Mammary epithelial cell (primary cell): ENCODE measurements at regions of chr2 and their contacts with region 1.

Region 1: GRCh38 chr2:86358957-86359356 is 21.5 kb upstream of the REEP1 start:
- DNase-seq: no peak
- H3K4me3 ChIP-seq: no peak overlapping the region
- H3K27ac ChIP-seq: no peak overlapping the region
- H3K4me1 ChIP-seq: no peaks in the 10 kb centered on the region
- H3K27me3 ChIP-seq: peaks cover 3% of the 10 kb centered on the region
- CTCF ChIP-seq: no peak

Region 2: DNA sequence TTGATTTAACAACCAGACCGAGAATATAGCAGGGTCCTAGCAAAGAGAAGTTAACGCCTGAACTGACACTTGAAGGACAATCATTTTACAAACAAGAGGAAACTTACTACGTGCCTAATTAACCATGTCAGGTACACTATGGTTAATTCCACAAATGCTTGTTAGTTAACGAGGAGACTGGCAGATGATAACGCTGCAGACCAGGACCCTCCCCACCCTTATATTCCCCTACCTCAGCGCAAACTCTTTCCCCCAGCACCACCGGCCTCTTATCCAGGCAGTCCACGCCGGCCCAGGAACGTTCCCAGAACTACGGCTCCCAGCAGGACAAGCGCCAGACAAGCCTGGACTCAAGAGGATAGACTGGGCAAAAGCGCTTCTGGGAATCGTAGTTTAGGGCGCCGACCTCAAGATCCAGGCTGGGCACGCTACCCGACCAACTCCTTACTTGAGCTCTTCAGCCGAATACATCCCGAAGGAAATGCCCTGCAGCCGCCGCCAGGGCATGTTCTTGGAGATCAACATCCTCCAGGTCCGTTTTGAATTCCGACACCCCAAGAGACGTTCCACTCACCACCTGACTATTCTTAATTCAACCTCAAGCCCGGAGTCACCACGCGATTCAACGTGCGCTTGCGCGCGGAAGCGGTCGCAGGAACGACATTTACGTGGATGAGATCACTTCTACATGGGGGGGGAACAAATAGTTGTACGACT is 253.5 kb before region 1 on chr2 and contains the start of gene POLR1A:
- CTCF ChIA-PET with region 1: no interaction called
- dilution Hi-C with region 1: no loop called
- in situ Hi-C with region 1: no loop called
- intact Hi-C with region 1: no loop called
- DNase-seq: peak; percentile 90
- H3K4me3 ChIP-seq: peak within 1 kb of the TSS; percentile 78 to 90 (median 88)
- H3K27ac ChIP-seq: peak within 1 kb of the TSS; percentile 87
- H3K4me1 ChIP-seq: peaks cover 25% of the 10 kb centered on the region
- H3K27me3 ChIP-seq: no peaks in the 10 kb centered on the region
- CTCF ChIP-seq: peak in 1 of 2 donors; percentile 6
- total RNA-seq, gene POLR1A: 35.7 to 49.4 TPM

Region 3: DNA sequence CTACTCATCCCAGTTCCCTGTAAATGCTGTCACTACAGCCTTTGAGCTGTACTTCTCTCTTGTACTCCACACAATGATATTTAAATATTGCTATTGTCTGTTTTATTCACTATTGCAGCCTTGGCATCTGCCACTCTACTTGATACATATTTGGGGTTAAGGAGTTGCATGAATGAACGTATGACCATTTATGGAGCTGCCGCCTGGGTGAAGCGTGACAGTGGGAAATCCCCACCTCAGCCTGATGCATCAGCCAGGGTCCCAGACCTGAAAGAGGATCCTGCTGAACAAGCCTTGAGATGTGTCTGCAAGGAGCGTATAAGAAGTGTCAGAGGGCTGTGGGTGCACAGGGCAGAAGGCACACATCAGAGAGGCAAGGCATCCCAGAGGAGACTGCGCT is 120.6 kb before region 1 on chr2:
- CTCF ChIA-PET with region 1: no interaction called
- dilution Hi-C with region 1: no loop called
- in situ Hi-C with region 1: loop called in 1 of 2 experiments (anchors 10 kb)
- intact Hi-C with region 1: no loop called
- DNase-seq: no peak
- H3K4me3 ChIP-seq: no peak overlapping the region
- H3K27ac ChIP-seq: no peak overlapping the region
- H3K4me1 ChIP-seq: no peaks in the 10 kb centered on the region
- H3K27me3 ChIP-seq: peaks cover 4% of the 10 kb centered on the region
- CTCF ChIP-seq: no peak

Region 4: GRCh38 chr2:86290596-86291327 is 68.2 kb before region 1 on chr2:
- CTCF ChIA-PET with region 1: no interaction called
- dilution Hi-C with region 1: loop called (anchors 5 kb)
- in situ Hi-C with region 1: no loop called
- intact Hi-C with region 1: no loop called
- DNase-seq: no peak
- H3K4me3 ChIP-seq: no peak overlapping the region
- H3K27ac ChIP-seq: no peak overlapping the region
- H3K4me1 ChIP-seq: no peaks in the 10 kb centered on the region
- H3K27me3 ChIP-seq: no peaks in the 10 kb centered on the region
- CTCF ChIP-seq: no peak

Region 5: DNA sequence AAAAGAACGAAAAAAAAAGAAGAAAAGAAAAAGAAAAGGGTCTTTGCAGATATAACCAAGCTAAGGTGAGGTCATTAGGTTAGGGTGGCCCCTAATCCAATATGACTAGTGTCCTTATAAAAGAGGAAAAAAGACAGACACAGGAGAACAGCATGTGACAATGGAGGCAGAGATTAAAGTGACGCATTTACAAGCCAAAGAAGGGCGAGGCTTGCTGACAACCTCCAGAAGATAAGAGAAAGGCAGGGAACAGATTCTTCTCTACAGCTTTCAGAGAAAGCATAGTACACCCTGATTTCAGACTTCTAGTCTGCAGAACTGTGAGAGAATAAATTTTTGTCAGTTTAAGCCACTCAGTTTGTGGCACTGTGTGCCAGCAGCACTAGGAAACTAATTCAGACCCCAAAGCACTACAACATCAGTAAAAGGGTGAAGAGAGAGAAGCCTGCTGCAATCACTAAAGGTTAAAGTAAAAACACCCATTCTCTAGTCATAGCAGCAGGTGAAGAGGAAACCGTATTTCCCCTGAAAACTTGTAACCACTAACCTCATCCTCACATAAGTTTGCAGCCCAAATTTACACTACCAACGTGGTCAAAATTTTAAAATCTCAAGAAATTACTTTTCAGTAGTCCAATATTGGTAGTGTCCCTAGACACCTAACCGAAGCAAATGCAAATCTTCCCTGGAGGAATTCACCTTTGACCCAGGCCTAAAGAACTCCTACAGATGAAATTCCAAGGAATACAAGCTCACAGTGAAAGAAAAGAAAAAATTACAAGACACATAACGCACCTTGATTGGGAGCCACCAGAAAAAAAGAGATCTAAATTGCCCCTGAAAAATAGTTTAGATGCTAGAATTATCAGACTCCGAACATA is 39.0 kb before region 1 on chr2:
- CTCF ChIA-PET with region 1: no interaction called
- dilution Hi-C with region 1: loop called (anchors 5 kb)
- in situ Hi-C with region 1: no loop called
- intact Hi-C with region 1: no loop called
- DNase-seq: no peak
- H3K4me3 ChIP-seq: no peak overlapping the region
- H3K27ac ChIP-seq: no peak overlapping the region
- H3K4me1 ChIP-seq: no peaks in the 10 kb centered on the region
- H3K27me3 ChIP-seq: peaks cover 7% of the 10 kb centered on the region
- CTCF ChIP-seq: no peak